ENCODE measurements at regions of chr11 and their contacts with region 1.

Region 1: GRCh38 chr11:118689851-118690552 is 10.6 kb upstream of the TREH start:
- DNase-seq: peak; percentile 90
- CTCF ChIP-seq: peak; percentile 99

Region 2: GRCh38 chr11:118643142-118643994 is 46.6 kb before region 1 on chr11:
- CTCF ChIA-PET with region 1: no interaction called
- POLR2A ChIA-PET with region 1: no interaction called
- DNase-seq: no peak
- CTCF ChIP-seq: no peak

Region 3: GRCh38 chr11:118672846-118673245 is 17.2 kb before region 1 on chr11:
- CTCF ChIA-PET with region 1: interaction called, 12 read pairs
- POLR2A ChIA-PET with region 1: no interaction called
- DNase-seq: no peak
- CTCF ChIP-seq: no peak

Region 4: DNA sequence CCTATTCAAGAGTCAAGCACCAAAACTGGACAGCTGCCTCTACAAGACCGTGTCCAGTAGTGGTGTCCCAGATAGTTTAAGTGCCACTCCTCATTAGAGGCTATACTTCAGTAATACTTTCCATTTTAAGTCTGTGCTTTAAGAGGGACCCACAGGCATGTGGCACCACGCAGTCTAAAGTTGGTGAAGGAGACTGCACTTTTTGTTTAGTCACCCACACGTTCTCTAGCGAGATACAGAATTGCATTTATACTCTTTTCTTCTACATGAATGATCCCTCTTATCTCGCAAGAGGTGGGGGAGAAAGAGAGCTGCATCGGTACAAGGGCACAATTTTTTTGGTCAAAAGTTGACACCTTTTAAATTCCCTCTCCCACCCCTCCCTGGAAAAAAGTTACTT is 59.4 kb after region 1 on chr11:
- CTCF ChIA-PET with region 1: interaction called, 10 read pairs
- POLR2A ChIA-PET with region 1: no interaction called
- DNase-seq: no peak
- CTCF ChIP-seq: no peak

Region 5: DNA sequence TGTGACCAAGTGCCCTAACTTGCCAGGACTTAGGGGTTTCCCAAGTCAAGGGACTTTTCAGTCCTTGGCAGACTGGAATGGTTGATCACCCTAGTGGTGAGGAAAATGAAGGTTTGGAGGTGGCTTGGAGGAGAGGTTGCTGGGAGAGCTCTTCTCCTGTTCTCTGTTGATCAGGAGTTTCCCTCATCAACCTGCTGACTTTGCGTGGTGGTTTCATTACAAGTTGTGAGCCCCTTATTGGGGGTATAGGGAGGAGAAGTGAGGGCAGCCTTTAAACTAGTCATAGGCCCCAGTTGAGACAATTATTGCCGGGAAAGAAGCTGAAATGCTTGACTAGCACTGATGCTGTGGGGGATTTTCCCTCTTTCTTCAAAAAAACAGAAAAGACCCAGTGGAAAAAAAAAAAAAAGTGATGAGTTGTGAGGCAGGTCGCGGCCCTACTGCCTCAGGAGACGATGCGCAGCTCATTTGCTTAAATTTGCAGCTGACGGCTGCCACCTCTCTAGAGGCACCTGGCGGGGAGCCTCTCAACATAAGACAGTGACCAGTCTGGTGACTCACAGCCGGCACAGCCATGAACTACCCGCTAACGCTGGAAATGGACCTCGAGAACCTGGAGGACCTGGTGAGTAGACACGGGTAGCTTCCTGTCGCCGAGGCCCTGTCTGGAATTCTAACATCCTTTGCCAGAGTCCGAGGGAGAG is 193.5 kb after region 1 on chr11 and contains the start of gene CXCR5:
- CTCF ChIA-PET with region 1: interaction called, 15 read pairs
- POLR2A ChIA-PET with region 1: no interaction called
- DNase-seq: peak; percentile 82
- CTCF ChIP-seq: peak; percentile 11

Region 6: GRCh38 chr11:118928108-118928870 is 238.3 kb after region 1 on chr11:
- CTCF ChIA-PET with region 1: interaction called, 45 read pairs
- POLR2A ChIA-PET with region 1: interaction called, 3 read pairs
- DNase-seq: peak; percentile 95
- CTCF ChIP-seq: peak; percentile 82

Region 7: DNA sequence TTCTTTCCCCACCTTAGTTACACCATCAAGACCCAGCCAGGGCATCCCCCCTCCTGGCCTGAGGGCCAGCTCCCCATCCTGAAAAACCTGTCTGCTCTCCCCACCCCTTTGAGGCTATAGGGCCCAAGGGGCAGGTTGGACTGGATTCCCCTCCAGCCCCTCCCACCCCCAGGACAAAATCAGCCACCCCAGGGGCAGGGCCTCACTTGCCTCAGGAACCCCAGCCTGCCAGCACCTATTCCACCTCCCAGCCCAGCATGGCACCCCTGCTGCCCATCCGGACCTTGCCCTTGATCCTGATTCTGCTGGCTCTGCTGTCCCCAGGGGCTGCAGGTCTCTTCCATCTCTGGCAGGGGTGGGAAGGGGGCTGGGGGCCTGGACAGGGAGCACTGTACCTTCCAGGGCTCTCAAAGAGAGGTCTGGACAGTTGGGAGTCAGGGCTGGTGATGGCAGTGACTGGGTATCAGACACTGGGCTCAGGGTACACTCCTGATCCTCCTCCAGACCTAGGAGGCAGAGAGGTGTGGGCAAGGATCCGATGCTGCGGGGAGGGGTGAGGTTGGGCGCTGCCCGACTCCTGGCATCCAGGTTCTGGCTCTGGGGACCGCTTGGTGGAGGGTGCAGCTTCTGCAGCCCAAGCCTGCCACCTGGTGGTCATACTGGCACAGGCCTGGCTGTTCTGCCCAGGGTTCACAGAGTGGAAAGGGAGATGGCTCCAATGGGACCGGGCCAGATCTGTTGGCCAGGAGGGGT is 266.3 kb after region 1 on chr11 and contains the start of gene UPK2:
- CTCF ChIA-PET with region 1: interaction called, 21 read pairs
- POLR2A ChIA-PET with region 1: no interaction called
- DNase-seq: peak; percentile 94
- CTCF ChIP-seq: peak; percentile 99

Measured in GM10248 (cell line).